BJ (cell line): ENCODE measurements at regions of chr2 and their contacts with region 1.

Region 1: DNA sequence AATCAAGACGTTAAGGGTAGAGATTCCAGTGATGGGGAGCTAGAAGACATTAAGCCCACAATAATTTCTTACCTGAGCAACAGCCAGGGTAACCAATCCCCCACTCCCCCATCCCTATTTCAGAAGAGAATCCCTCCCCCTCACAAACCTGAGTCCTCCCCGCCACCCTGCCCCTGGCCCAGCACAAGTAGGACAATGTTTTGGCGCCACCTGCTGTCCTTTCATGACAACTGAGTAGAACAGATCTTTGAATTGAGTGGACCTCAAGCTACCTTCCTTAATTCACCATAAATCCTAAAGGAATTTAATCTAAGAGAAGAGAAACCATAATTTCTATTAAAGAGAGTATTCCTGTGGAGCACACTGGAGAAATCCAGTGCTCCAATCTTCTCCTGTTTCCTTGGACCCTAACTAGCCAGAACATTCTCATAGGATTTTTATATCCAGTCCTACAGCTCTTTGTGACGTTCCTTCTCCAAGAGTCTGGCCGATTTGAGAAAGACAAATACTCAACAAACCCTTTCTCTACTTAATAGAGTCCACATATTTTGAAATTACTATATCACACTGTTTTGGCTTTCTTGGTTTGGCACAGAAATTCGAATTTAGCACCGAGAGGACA is 41.1 kb downstream of the NHEJ1 start:
- DNase-seq: no peak
- H3K4me3 ChIP-seq: no peak overlapping the region
- H3K27me3 ChIP-seq: no peaks in the 10 kb centered on the region
- CTCF ChIP-seq: peak; percentile 78

Region 2: DNA sequence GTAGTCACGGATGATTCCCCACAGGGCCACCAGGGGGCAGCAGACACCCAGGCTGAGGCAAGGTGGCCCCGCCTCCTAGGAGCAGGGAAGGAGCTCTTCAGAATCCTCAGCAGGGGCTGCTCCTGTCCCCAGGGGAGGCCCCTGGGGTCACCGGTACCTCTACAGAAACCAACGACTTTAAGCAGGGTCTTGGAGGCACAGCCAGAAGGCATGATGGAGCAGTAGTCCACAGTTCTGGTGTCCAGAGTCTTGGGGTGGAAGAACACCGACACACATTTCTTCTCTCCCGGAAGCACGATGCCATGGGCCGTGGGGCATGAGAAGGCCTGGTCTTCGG is 89.7 kb before region 1 on chr2:
- CTCF ChIA-PET with region 1: interaction called, 86 read pairs
- POLR2A ChIA-PET with region 1: no interaction called
- DNase-seq: no peak
- H3K4me3 ChIP-seq: no peak overlapping the region
- H3K27me3 ChIP-seq: peaks cover 22% of the 10 kb centered on the region
- CTCF ChIP-seq: peak; percentile 97

Region 3: DNA sequence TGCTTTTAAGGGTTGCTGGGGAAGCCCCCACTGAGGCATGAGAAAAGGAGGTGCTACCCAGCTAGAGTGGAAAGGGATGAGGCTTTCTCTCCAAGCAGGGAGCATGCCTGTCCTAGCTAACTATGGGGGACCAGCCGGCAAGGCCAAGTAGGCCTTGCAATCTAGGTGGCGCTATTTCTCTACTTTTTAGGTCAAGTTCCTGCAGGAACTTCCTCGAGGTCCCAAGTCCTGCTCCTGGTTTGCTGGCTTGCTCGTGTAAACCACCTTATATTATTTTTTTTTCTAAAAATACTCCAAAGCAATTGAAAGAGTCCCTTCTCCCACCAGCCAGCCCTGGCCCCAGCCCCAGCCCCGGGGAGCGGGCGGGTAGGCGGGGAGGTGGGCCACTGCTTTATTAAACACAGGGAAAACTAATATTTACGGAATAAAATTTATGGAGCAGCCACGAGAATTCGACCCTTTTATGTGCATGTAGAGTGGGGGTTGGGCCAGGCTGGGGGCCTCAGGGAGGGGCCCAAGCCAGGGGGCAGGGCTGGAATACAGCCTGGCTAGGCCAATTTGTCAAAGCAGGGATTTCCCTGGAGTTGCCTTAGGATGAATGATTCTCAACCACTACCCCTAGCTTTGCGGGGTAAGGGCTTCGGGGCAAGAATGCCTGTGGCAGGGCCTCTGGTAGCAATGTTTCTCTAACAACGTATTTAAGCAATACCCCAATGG is 46.0 kb before region 1 on chr2:
- CTCF ChIA-PET with region 1: interaction called, 156 read pairs
- POLR2A ChIA-PET with region 1: no interaction called
- DNase-seq: no peak
- H3K4me3 ChIP-seq: no peak overlapping the region
- H3K27me3 ChIP-seq: no peaks in the 10 kb centered on the region
- CTCF ChIP-seq: peak; percentile 65

Region 4: DNA sequence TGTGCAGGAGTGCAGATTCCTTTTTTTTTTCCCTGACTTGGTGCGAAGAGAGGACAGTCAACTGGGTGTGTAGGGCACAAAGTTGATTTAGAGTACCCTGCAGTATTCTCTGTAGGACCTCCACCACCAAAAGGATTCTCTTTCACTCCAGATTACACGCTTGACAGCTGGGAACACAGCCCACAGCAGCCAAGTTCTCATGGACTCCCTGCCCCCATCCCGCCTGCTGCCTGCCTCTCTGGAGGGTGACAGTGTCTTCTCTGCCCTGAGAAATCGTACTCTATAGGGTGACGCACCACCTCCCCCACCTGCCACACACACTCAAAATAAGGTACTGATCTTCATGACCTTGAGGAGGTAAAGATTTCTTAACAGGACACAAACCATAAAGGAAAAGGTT is 32.2 kb before region 1 on chr2:
- CTCF ChIA-PET with region 1: interaction called, 11 read pairs
- POLR2A ChIA-PET with region 1: no interaction called
- DNase-seq: no peak
- H3K4me3 ChIP-seq: no peak overlapping the region
- H3K27me3 ChIP-seq: no peaks in the 10 kb centered on the region
- CTCF ChIP-seq: no peak

Region 5: DNA sequence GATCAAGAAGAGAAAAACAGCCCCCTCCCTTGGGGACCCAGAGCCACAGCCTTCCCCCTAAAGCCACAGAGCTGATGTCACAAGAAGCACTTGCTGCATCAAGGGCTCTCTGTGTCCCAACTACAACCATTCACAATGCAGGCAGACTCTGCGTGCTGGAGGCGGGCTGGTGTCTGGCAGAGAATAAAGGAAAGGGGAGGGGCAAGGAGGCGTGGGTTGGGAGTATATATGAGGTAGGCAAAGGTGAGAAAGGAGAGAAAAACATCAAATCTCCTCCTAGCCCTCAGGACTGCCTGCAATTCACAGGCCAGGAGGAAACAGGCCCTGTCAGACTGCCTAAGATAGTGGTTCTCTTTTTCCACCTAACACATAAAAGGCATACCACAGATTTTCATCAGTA is 10.1 kb before region 1 on chr2:
- CTCF ChIA-PET with region 1: interaction called, 52 read pairs
- POLR2A ChIA-PET with region 1: interaction called, 3 read pairs
- DNase-seq: no peak
- H3K4me3 ChIP-seq: no peak overlapping the region
- H3K27me3 ChIP-seq: no peaks in the 10 kb centered on the region
- CTCF ChIP-seq: no peak

Region 6: GRCh38 chr2:219149667-219150066 is 30.1 kb after region 1 on chr2:
- CTCF ChIA-PET with region 1: interaction called, 30 read pairs
- POLR2A ChIA-PET with region 1: interaction called, 5 read pairs
- DNase-seq: no peak
- H3K4me3 ChIP-seq: no peak overlapping the region
- H3K27me3 ChIP-seq: no peaks in the 10 kb centered on the region
- CTCF ChIP-seq: no peak